IMR-90 (cell line): ENCODE measurements at regions of chr7 and their contacts with region 1.

Region 1: GRCh38 chr7:117873310-117874190 is at the start of gene CTTNBP2:
- DNase-seq: peak; percentile 59
- ATAC-seq: peak; percentile 83
- H3K4me3 ChIP-seq: peak within 1 kb of the TSS; percentile 68
- H3K27ac ChIP-seq: peak within 1 kb of the TSS; percentile 42
- H3K4me1 ChIP-seq: no peaks in the 10 kb centered on the region
- H3K27me3 ChIP-seq: peaks cover 1% of the 10 kb centered on the region; the same call in 1 of the 2 replicates
- CTCF ChIP-seq: 0 out of 2 replicates have a peak, but pooled peaks have one; percentile 11
- POLR2A ChIP-seq: no peak
- RAD21 ChIP-seq: peak; percentile 35; the same call in 1 of the 2 replicates
- total RNA-seq, gene CTTNBP2: 11.3 and 11.4 TPM in 2 replicates

Region 2: GRCh38 chr7:117458977-117459583 is 414.5 kb before region 1 on chr7:
- CTCF ChIA-PET with region 1: no interaction called
- POLR2A ChIA-PET with region 1: no interaction called
- dilution Hi-C with region 1: no loop called
- in situ Hi-C with region 1: no loop called
- intact Hi-C with region 1: loop called (anchors 10 kb)
- DNase-seq: peak; percentile 44
- ATAC-seq: peak; percentile 64; the same call in 1 of the 2 replicates
- H3K4me3 ChIP-seq: no peak overlapping the region
- H3K27ac ChIP-seq: no peak overlapping the region
- H3K4me1 ChIP-seq: no peaks in the 10 kb centered on the region
- H3K27me3 ChIP-seq: no peaks in the 10 kb centered on the region
- CTCF ChIP-seq: peak; percentile 73
- POLR2A ChIP-seq: no peak
- RAD21 ChIP-seq: peak; percentile 61

Region 3: GRCh38 chr7:118183786-118184564 is 310.4 kb after region 1 on chr7 and contains the start of gene LSM8:
- CTCF ChIA-PET with region 1: no interaction called
- POLR2A ChIA-PET with region 1: no interaction called
- dilution Hi-C with region 1: no loop called
- in situ Hi-C with region 1: no loop called
- intact Hi-C with region 1: loop called (anchors 5 kb)
- DNase-seq: peak; percentile 99
- ATAC-seq: peak; percentile 98
- H3K4me3 ChIP-seq: peak within 1 kb of the TSS; percentile 76
- H3K27ac ChIP-seq: peak within 1 kb of the TSS; percentile 89
- H3K4me1 ChIP-seq: no peaks in the 10 kb centered on the region
- H3K27me3 ChIP-seq: no peaks in the 10 kb centered on the region
- CTCF ChIP-seq: no peak
- POLR2A ChIP-seq: peak; percentile 88
- RAD21 ChIP-seq: no peak
- total RNA-seq, gene LSM8: 9.7 and 33.9 TPM in 2 replicates

Region 4: DNA sequence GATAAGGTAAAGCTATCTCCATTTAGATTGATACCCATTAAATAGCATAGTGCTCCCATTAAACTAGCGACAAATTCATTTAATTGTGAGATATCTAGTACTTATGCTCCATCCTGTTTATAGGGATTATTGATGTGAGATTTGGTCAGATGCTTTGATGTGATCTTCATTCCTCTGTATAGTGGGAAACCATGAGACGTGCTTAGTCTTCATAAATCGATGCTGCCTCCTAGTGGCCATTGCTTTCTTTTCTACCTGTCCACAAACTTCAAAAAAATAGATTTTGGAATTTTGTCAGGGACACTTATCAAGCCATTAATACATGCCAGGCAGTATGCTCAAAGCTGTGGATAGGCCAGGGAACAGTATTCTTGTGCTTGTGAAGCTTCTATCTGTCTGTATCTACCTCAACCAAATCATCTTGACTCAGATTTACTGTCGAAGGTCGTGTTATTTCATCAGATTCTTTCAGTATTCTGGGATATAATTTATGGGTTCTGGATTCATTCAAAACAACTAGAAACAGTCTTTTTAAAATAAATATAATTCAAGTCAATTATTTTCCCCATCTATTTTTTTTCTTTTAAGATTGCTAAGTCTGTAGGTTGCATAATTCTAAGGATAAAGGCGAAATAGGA is 322.4 kb after region 1 on chr7:
- CTCF ChIA-PET with region 1: no interaction called
- POLR2A ChIA-PET with region 1: no interaction called
- dilution Hi-C with region 1: no loop called
- in situ Hi-C with region 1: no loop called
- intact Hi-C with region 1: loop called (anchors 5 kb)
- DNase-seq: peak; percentile 70
- ATAC-seq: peak; percentile 88
- H3K4me3 ChIP-seq: no peak overlapping the region
- H3K27ac ChIP-seq: no peak overlapping the region
- H3K4me1 ChIP-seq: no peaks in the 10 kb centered on the region
- H3K27me3 ChIP-seq: no peaks in the 10 kb centered on the region
- CTCF ChIP-seq: peak; percentile 72
- POLR2A ChIP-seq: no peak
- RAD21 ChIP-seq: peak; percentile 59